IMR-90 (cell line): ENCODE measurements at regions of chr1 and their contacts with region 1.

Region 1: DNA sequence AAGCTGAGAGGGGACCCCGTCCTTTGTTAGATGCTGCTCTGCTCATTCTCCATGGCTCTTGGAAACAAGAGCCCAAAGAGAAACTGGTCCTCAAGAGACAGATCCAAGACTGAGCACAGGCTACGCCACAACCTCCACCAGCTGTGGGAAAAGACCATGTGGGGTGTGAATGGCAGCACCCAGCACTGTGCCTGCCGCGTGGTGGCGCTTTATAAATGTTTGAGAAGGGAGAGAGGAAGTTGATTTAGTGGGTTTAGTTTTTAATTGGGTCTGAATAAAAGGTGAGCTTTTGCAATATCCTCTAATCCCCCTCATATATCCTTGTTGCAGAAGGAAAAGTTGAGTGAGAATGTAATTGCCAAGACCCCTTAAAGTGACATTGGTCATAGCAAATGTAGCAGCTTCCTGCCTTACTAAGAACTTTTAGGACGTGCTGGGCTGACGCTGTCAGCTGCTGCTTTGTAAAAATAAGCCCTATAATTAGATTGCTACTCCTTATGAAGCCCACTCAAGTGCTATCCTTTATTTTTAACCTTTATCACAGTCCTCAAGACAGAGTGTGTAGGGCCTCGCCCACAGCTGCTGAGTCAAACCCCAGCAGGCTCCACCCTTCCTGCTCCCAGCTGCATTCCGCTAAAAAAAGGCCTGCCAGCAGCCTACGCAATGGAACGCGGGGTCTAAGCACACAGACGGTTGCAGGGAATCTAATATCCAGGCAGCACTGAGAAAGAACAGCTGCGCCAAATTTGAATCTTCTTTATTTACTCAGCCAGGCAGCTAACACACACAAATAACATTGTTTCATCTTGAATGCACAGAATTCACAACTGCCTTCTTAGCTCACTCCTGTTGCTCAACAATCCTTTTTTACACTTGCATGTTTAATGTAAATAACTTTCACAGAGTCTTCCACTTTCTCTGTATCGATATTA is 47.4 kb upstream of the PRDX6 start:
- DNase-seq: peak; percentile 96
- ATAC-seq: peak; percentile 97
- H3K4me3 ChIP-seq: peak overlapping the region; percentile 21; the same call in 1 of the 2 replicates
- H3K27ac ChIP-seq: peak overlapping the region; percentile 74
- H3K4me1 ChIP-seq: peaks cover 5% of the 10 kb centered on the region; the same call in 1 of the 2 replicates
- H3K27me3 ChIP-seq: no peaks in the 10 kb centered on the region
- CTCF ChIP-seq: peak; percentile 58
- POLR2A ChIP-seq: no peak
- RAD21 ChIP-seq: peak; percentile 44

Region 2: GRCh38 chr1:173714759-173715537 is 285.2 kb after region 1 on chr1 and contains the start of gene KLHL20:
- CTCF ChIA-PET with region 1: no interaction called
- POLR2A ChIA-PET with region 1: no interaction called
- dilution Hi-C with region 1: no loop called
- in situ Hi-C with region 1: no loop called
- intact Hi-C with region 1: loop called (anchors 1 kb)
- DNase-seq: peak; percentile 90
- ATAC-seq: peak; percentile 97
- H3K4me3 ChIP-seq: peak within 1 kb of the TSS; percentile 76
- H3K27ac ChIP-seq: peak within 1 kb of the TSS; percentile 85
- H3K4me1 ChIP-seq: no peaks in the 10 kb centered on the region
- H3K27me3 ChIP-seq: peaks cover 4% of the 10 kb centered on the region; the same call in 1 of the 2 replicates
- CTCF ChIP-seq: 0 out of 2 replicates have a peak, but pooled peaks have one; percentile 6
- POLR2A ChIP-seq: peak; percentile 65
- RAD21 ChIP-seq: no peak
- total RNA-seq, gene KLHL20: 23.3 and 25.8 TPM in 2 replicates

Region 3: GRCh38 chr1:173824331-173825081 is 394.8 kb after region 1 on chr1 and contains the starts of genes CENPL and DARS2:
- CTCF ChIA-PET with region 1: interaction called, 14 read pairs
- POLR2A ChIA-PET with region 1: no interaction called
- dilution Hi-C with region 1: no loop called
- in situ Hi-C with region 1: loop called (anchors 10 kb)
- intact Hi-C with region 1: loop called (anchors 1 kb)
- DNase-seq: peak; percentile 98
- ATAC-seq: peak; percentile 97
- H3K4me3 ChIP-seq: peak within 1 kb of the TSS; percentile 65
- H3K27ac ChIP-seq: peak within 1 kb of the TSS; percentile 84
- H3K4me1 ChIP-seq: peaks cover 2% of the 10 kb centered on the region; the same call in 1 of the 2 replicates
- H3K27me3 ChIP-seq: no peaks in the 10 kb centered on the region
- CTCF ChIP-seq: no peak
- POLR2A ChIP-seq: peak; percentile 86; the same call in 1 of the 2 replicates
- RAD21 ChIP-seq: no peak
- total RNA-seq, gene CENPL: 21.1 and 21.9 TPM in 2 replicates
- total RNA-seq, gene DARS2: 18.8 and 22.8 TPM in 2 replicates

Region 4: GRCh38 chr1:173937062-173937461 is 507.3 kb after region 1 on chr1:
- CTCF ChIA-PET with region 1: no interaction called
- POLR2A ChIA-PET with region 1: no interaction called
- dilution Hi-C with region 1: no loop called
- in situ Hi-C with region 1: no loop called
- intact Hi-C with region 1: loop called (anchors 10 kb)
- DNase-seq: no peak
- ATAC-seq: no peak
- H3K4me3 ChIP-seq: no peak overlapping the region
- H3K27ac ChIP-seq: no peak overlapping the region
- H3K4me1 ChIP-seq: no peaks in the 10 kb centered on the region
- H3K27me3 ChIP-seq: no peaks in the 10 kb centered on the region
- CTCF ChIP-seq: no peak
- POLR2A ChIP-seq: no peak
- RAD21 ChIP-seq: no peak

Region 5: DNA sequence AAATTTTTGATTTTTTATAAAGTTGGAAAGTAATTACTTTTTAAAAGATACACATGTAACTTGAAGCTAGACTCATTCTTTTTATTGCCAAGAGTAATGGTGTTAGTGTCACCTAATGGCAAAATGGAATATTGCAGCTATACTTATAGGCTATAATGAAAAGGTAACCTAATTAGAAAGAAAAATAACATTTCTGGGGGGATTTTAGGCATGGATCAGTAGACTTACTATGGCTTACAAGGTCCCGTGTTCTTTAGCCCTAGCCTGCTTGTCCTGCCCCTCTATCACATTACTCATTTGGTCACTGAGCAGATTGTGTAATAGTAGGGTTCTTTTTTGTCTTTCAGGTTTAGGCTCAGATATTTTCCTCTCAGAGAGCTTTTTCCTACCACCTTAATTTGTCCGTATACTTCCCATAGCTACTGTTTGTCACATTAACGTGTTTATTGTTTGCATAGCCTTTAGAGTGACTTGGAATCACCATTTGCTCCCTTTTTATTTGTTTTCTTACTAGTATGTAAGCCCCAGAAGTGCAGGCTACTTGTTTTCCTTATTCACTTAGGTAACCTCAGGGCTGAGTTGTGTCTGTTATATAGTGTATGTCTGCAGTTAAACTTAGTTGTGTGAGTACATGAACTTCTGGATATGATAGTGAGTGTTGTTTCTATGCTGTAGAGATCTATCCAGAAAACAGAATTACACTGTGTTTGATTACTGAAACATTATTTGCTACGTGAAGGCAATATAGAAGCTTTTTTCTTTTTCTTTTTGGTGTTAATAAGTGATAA is 788.2 kb after region 1 on chr1:
- CTCF ChIA-PET with region 1: no interaction called
- POLR2A ChIA-PET with region 1: no interaction called
- dilution Hi-C with region 1: no loop called
- in situ Hi-C with region 1: no loop called
- intact Hi-C with region 1: loop called (anchors 10 kb)
- DNase-seq: peak; percentile 54
- ATAC-seq: peak; percentile 85
- H3K4me3 ChIP-seq: no peak overlapping the region
- H3K27ac ChIP-seq: no peak overlapping the region
- H3K4me1 ChIP-seq: no peaks in the 10 kb centered on the region
- H3K27me3 ChIP-seq: no peaks in the 10 kb centered on the region
- CTCF ChIP-seq: peak; percentile 77
- POLR2A ChIP-seq: no peak
- RAD21 ChIP-seq: peak; percentile 84